ENCODE measurements at regions of chr17 and their contacts with region 1.

Region 1: GRCh38 chr17:75896415-75897159 is at the start of gene TRIM65:
- DNase-seq: peak; percentile 55 to 91 (median 74)
- ATAC-seq: peak; percentile 85
- H3K4me3 ChIP-seq: peak within 1 kb of the TSS; percentile 57
- H3K4me3 Mint-ChIP-seq: peak within 1 kb of the TSS; percentile 88
- H3K27ac ChIP-seq: peak within 1 kb of the TSS in 1 of 2 donors; percentile 29
- H3K27ac Mint-ChIP-seq: peak within 1 kb of the TSS; percentile 78
- H3K4me1 ChIP-seq: peaks cover 33% of the 10 kb centered on the region
- H3K4me1 Mint-ChIP-seq: peaks cover 25% of the 10 kb centered on the region
- H3K27me3 ChIP-seq: no peaks in the 10 kb centered on the region
- H3K27me3 Mint-ChIP-seq: no peaks in the 10 kb centered on the region
- CTCF ChIP-seq: peak; percentile 33
- total RNA-seq, gene TRIM65: 9.9 to 11.7 TPM

Region 2: DNA sequence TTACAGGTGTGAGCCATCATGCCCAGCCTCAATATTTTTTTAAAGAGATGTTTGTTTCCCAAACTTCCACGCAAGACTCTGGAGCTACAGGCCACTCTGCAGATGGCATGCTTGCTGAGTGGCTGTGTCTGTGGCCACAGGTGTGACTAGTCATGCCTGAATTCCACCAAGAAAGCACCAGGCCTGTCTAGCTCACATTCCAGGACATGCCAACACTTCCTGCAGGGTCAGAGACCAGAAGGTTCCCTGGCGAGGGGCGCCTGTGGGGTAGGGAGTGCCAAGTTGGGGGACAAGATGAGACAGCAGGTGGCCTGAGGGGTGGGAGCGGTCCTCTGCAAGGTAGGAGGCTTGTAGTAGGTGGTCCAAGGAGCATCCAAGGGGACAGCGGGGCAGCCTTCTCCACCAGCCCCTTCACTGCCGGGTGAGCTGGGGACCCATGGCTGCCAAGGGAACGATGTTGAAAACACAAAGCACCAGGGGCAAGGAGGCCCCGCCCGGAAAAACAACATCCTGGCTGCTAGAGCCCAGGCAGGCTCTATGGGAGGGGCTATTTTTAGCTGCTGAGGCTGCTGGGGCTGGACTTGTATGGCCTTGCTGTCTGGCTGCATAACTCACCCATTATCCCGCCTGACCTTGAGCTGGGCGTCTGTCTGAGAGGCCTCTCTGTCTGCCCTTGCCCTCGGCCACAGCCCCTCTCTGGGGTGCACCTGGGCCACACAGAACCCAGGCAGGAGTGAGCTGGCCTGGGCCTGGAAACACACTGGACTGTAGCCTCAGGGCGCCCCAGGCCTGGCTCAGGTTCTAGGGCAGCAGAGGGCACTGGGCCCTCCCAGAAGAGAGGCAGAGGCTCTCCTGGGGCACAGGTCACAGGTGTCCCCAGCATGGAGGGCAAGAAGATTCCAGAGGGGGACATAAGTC is 23.9 kb before region 1 on chr17:
- CTCF ChIA-PET with region 1: interaction called, 50 read pairs
- POLR2A ChIA-PET with region 1: interaction called, 49 read pairs
- intact Hi-C with region 1: loop called in 1 of 2 experiments (anchors 2 kb)
- DNase-seq: peak; percentile 56 to 87 (median 68)
- ATAC-seq: peak; percentile 65
- H3K4me3 ChIP-seq: no peak overlapping the region
- H3K4me3 Mint-ChIP-seq: peak overlapping the region; percentile 58
- H3K27ac ChIP-seq: peak overlapping the region; percentile 69 to 81
- H3K27ac Mint-ChIP-seq: peak overlapping the region; percentile 90
- H3K4me1 ChIP-seq: peaks cover 48% of the 10 kb centered on the region
- H3K4me1 Mint-ChIP-seq: peaks cover 47% of the 10 kb centered on the region
- H3K27me3 ChIP-seq: no peaks in the 10 kb centered on the region
- H3K27me3 Mint-ChIP-seq: no peaks in the 10 kb centered on the region
- CTCF ChIP-seq: no peak

Measured in CD4-positive, alpha-beta T cell (primary cell).